ENCODE measurements at regions of chr11 and their contacts with region 1.

Region 1: GRCh38 chr11:124882339-124883071 is 15.2 kb downstream of the ROBO4 start:
- DNase-seq: no peak
- ATAC-seq: no peak
- H3K4me3 ChIP-seq: no peak overlapping the region
- H3K4me3 Mint-ChIP-seq: no peak overlapping the region
- H3K27ac ChIP-seq: no peak overlapping the region
- H3K27ac Mint-ChIP-seq: no peak overlapping the region
- H3K4me1 ChIP-seq: peaks cover 3% of the 10 kb centered on the region
- H3K4me1 Mint-ChIP-seq: peaks cover 13% of the 10 kb centered on the region
- H3K27me3 ChIP-seq: peaks cover 5 to 9% of the 10 kb centered on the region in 2 experiments
- H3K27me3 Mint-ChIP-seq: peaks cover 12% of the 10 kb centered on the region
- CTCF ChIP-seq: no peak

Region 2: DNA sequence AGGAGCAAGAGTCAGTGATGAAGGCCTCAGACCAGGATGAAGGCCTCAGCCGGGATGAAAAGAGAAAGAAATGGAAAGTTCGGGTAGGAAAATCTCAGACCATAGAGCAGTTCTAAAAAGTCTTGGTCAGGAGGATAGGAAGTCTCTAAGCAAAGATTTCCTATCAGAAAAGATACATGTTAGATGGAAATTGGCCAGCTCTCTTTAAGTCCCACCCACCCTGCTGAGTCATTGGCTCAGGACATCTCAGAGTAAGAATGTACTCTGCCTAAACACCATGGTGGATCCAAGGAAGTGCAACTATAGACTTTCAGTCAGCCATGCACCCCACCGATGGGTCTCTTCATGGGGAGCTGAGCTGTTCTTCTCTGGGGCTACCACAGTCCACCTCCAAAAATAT is 488.1 kb before region 1 on chr11:
- CTCF ChIA-PET with region 1: no interaction called
- POLR2A ChIA-PET with region 1: no interaction called
- intact Hi-C with region 1: no loop called
- DNase-seq: no peak
- ATAC-seq: no peak
- H3K4me3 ChIP-seq: no peak overlapping the region
- H3K4me3 Mint-ChIP-seq: no peak overlapping the region
- H3K27ac ChIP-seq: no peak overlapping the region
- H3K27ac Mint-ChIP-seq: no peak overlapping the region
- H3K4me1 ChIP-seq: no peaks in the 10 kb centered on the region
- H3K4me1 Mint-ChIP-seq: no peaks in the 10 kb centered on the region
- H3K27me3 ChIP-seq: no peaks in the 10 kb centered on the region
- H3K27me3 Mint-ChIP-seq: peaks cover 13% of the 10 kb centered on the region
- CTCF ChIP-seq: no peak

Region 3: DNA sequence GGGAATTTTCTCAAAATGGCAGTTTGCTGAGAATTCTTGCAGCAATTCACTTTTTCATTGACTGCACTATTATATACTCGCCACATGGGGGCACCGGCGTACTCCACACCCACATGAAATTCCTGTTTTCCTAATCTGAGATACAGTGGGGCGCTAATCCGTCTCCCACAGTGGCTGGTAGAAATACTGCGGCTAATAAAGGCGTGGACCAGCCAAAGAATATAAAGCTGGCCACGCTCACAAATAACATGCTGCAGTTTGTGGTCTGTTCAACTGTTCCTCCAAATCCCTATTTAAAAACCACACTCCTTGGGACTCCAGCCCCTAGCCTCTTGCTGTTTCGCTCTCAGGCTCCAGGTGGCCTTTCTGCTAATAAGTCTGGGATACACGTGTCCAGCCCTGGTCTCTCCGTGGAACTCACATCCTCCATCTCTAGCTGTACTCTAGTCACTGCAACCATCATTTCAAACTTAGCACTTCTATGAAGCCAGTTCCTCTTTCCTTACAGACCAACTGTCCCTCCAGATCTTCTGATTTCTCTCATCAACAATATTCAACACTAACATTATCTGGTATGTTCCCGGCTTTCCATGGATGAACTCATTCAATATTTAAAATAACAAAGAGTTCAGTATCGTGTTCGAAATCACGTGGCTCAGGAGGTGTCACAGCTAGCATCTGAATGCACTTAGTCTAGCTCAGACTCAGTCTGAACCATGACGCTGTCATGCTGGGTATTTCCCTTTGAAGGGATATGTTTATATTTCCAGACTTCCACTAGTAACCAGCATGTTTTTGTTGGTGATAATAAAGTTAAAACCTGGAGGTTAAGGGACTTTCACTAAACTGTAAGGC is 237.9 kb before region 1 on chr11:
- CTCF ChIA-PET with region 1: no interaction called
- POLR2A ChIA-PET with region 1: no interaction called
- intact Hi-C with region 1: no loop called
- DNase-seq: peak in 8 of 14 experiments; percentile 2 to 71 (median 28)
- ATAC-seq: peak; percentile 77
- H3K4me3 ChIP-seq: no peak overlapping the region
- H3K4me3 Mint-ChIP-seq: no peak overlapping the region
- H3K27ac ChIP-seq: no peak overlapping the region
- H3K27ac Mint-ChIP-seq: no peak overlapping the region
- H3K4me1 ChIP-seq: peaks cover 3% of the 10 kb centered on the region
- H3K4me1 Mint-ChIP-seq: no peaks in the 10 kb centered on the region
- H3K27me3 ChIP-seq: no peaks in the 10 kb centered on the region
- H3K27me3 Mint-ChIP-seq: no peaks in the 10 kb centered on the region
- CTCF ChIP-seq: peak; percentile 95

Region 4: GRCh38 chr11:124769801-124770639 is 112.5 kb before region 1 on chr11:
- CTCF ChIA-PET with region 1: no interaction called
- POLR2A ChIA-PET with region 1: no interaction called
- intact Hi-C with region 1: no loop called
- DNase-seq: no peak
- ATAC-seq: no peak
- H3K4me3 ChIP-seq: no peak overlapping the region
- H3K4me3 Mint-ChIP-seq: no peak overlapping the region
- H3K27ac ChIP-seq: no peak overlapping the region
- H3K27ac Mint-ChIP-seq: no peak overlapping the region
- H3K4me1 ChIP-seq: no peaks in the 10 kb centered on the region
- H3K4me1 Mint-ChIP-seq: no peaks in the 10 kb centered on the region
- H3K27me3 ChIP-seq: no peaks in the 10 kb centered on the region
- H3K27me3 Mint-ChIP-seq: no peaks in the 10 kb centered on the region
- CTCF ChIP-seq: no peak

Region 5: GRCh38 chr11:124823504-124824372 is 58.8 kb before region 1 on chr11:
- CTCF ChIA-PET with region 1: no interaction called
- POLR2A ChIA-PET with region 1: no interaction called
- intact Hi-C with region 1: no loop called
- DNase-seq: no peak
- ATAC-seq: no peak
- H3K4me3 ChIP-seq: no peak overlapping the region
- H3K4me3 Mint-ChIP-seq: no peak overlapping the region
- H3K27ac ChIP-seq: no peak overlapping the region
- H3K27ac Mint-ChIP-seq: no peak overlapping the region
- H3K4me1 ChIP-seq: no peaks in the 10 kb centered on the region
- H3K4me1 Mint-ChIP-seq: no peaks in the 10 kb centered on the region
- H3K27me3 ChIP-seq: peaks cover 0 to 28% of the 10 kb centered on the region in 2 experiments
- H3K27me3 Mint-ChIP-seq: peaks cover 69% of the 10 kb centered on the region
- CTCF ChIP-seq: no peak

Region 6: GRCh38 chr11:124943254-124943616 is 60.7 kb after region 1 on chr11:
- CTCF ChIA-PET with region 1: no interaction called
- POLR2A ChIA-PET with region 1: no interaction called
- intact Hi-C with region 1: loop called in 1 of 2 experiments (anchors 5 kb)
- DNase-seq: no peak
- ATAC-seq: no peak
- H3K4me3 ChIP-seq: no peak overlapping the region
- H3K4me3 Mint-ChIP-seq: no peak overlapping the region
- H3K27ac ChIP-seq: no peak overlapping the region
- H3K27ac Mint-ChIP-seq: peak overlapping the region; percentile 25
- H3K4me1 ChIP-seq: peaks cover 9% of the 10 kb centered on the region
- H3K4me1 Mint-ChIP-seq: peaks cover 24% of the 10 kb centered on the region
- H3K27me3 ChIP-seq: no peaks in the 10 kb centered on the region
- H3K27me3 Mint-ChIP-seq: no peaks in the 10 kb centered on the region
- CTCF ChIP-seq: no peak